Thyroid gland (tissue), 4 donors: ENCODE measurements at regions of chr12 and their contacts with region 1.

Region 1: GRCh38 chr12:6723607-6724396 is at the start of gene COPS7A:
- DNase-seq: peak; percentile 99
- H3K4me3 ChIP-seq: peak within 1 kb of the TSS; percentile 29 to 47 (median 37)
- H3K27ac ChIP-seq: peak within 1 kb of the TSS; percentile 51 to 69 (median 66)
- H3K4me1 ChIP-seq: peaks cover 4 to 11% of the 10 kb centered on the region in 2 donors
- H3K27me3 ChIP-seq: no peaks in the 10 kb centered on the region
- CTCF ChIP-seq: peak in 1 of 6 experiments; percentile 6
- POLR2A ChIP-seq: peak in 1 of 2 donors; percentile 64
- total RNA-seq, gene COPS7A: 44.5 to 86.7 (median 63.1) TPM

Region 2: GRCh38 chr12:6662906-6663742 is 60.7 kb before region 1 on chr12 and contains the start of gene ING4:
- intact Hi-C with region 1: loop called (anchors 10 kb)
- DNase-seq: peak; percentile 98 to 99
- H3K4me3 ChIP-seq: peak within 1 kb of the TSS; percentile 30 to 61 (median 51)
- H3K27ac ChIP-seq: peak within 1 kb of the TSS; percentile 41 to 71 (median 48)
- H3K4me1 ChIP-seq: peaks cover 9 to 10% of the 10 kb centered on the region in 2 donors
- H3K27me3 ChIP-seq: no peaks in the 10 kb centered on the region
- CTCF ChIP-seq: no peak
- POLR2A ChIP-seq: peak in 1 of 2 donors; percentile 45
- total RNA-seq, gene ING4: 52.7 to 85.1 (median 67.2) TPM